Upper lobe of right lung (tissue), 1 donor: ENCODE measurements at regions of chr2 and their contacts with region 1.

Region 1: DNA sequence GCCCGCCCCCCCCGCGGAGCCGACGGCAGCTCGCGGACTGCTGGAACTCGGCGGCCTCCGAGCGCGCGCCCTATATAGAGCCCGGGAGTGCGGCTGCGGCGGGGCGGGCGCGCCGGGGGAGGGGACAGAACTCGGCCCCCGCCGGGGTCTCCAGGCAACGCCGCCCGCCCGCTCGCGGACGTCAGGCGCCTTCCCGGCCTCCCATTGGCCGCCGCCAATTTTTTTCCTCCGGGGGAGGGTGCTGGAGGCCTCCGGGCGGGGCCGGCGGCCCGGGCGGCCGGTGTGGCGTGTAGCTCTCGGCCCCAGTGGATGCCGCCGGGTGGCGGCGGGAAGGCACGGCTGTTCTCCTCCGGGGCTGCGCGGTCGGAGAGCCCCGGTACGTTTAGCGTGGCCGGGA is at the start of gene ZFP36L2:
- DNase-seq: peak; percentile 99
- ATAC-seq: peak; percentile 83
- H3K4me3 ChIP-seq: peak within 1 kb of the TSS; percentile 82
- H3K27ac ChIP-seq: peak within 1 kb of the TSS; percentile 98
- H3K4me1 ChIP-seq: peaks cover 35% of the 10 kb centered on the region
- H3K27me3 ChIP-seq: no peaks in the 10 kb centered on the region
- CTCF ChIP-seq: no peak
- total RNA-seq, gene ZFP36L2: 139 TPM

Region 2: GRCh38 chr2:42944779-42945415 is 281.7 kb before region 1 on chr2:
- intact Hi-C with region 1: loop called (anchors 5 kb)
- DNase-seq: no peak
- ATAC-seq: no peak
- H3K4me3 ChIP-seq: no peak overlapping the region
- H3K27ac ChIP-seq: no peak overlapping the region
- H3K4me1 ChIP-seq: peaks cover 25% of the 10 kb centered on the region
- H3K27me3 ChIP-seq: no peaks in the 10 kb centered on the region
- CTCF ChIP-seq: no peak

Region 3: GRCh38 chr2:42974721-42975717 is 251.5 kb before region 1 on chr2:
- intact Hi-C with region 1: loop called (anchors 10 kb)
- DNase-seq: peak; percentile 85
- ATAC-seq: peak; percentile 88
- H3K4me3 ChIP-seq: peak overlapping the region; percentile 32
- H3K27ac ChIP-seq: peak overlapping the region; percentile 65
- H3K4me1 ChIP-seq: peaks cover 15% of the 10 kb centered on the region
- H3K27me3 ChIP-seq: no peaks in the 10 kb centered on the region
- CTCF ChIP-seq: peak; percentile 83

Region 4: GRCh38 chr2:43131024-43131889 is 95.3 kb before region 1 on chr2:
- intact Hi-C with region 1: loop called (anchors 10 kb)
- DNase-seq: peak; percentile 88
- ATAC-seq: peak; percentile 64
- H3K4me3 ChIP-seq: no peak overlapping the region
- H3K27ac ChIP-seq: peak overlapping the region; percentile 86
- H3K4me1 ChIP-seq: peaks cover 72% of the 10 kb centered on the region
- H3K27me3 ChIP-seq: no peaks in the 10 kb centered on the region
- CTCF ChIP-seq: peak; percentile 62

Region 5: DNA sequence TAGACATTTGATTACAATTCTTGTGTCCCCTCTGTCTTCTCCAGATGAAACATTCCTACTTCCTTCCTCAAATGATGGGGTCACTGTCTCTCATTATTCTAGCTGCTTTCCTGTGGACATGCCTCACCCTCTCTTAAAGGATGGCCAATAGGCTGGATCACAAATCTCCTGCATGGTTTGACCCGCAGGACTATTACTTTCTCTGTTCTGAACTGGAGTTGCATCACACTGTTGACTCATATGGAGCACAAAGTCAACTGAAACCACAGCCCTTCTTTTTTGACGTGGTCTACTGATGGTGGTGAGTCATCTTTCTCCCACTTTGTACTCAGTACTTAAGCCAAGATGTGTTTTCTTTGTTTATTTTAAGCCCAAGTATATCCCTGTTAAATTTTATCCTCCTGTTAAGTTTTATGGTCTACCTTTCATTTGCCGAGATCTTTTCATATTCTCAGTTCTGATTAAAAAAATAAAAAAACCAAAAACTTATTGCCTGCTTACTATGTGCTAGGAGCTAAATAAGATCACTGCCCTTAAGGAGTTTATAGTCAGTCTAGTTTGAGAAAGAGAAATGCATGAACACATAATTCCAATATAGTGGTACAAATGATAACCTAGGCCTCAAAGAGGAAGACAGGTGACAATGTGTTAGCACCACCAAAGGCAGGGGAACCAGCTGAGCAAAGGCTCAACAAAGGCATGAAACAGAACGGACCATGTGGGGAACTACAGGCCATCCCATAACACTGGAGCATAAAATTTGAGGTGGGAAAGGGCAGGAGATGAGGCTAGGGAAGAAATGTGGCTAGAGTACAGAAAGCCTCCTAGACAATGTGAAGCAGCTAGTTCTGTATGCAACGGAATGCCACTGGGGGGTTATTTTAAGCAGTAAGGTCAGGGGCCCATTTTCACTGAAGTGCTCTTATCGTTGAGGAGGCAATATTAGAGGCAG is 67.5 kb after region 1 on chr2:
- intact Hi-C with region 1: no loop called
- DNase-seq: no peak
- ATAC-seq: peak; percentile 93
- H3K4me3 ChIP-seq: no peak overlapping the region
- H3K27ac ChIP-seq: peak overlapping the region; percentile 26
- H3K4me1 ChIP-seq: peaks cover 17% of the 10 kb centered on the region
- H3K27me3 ChIP-seq: no peaks in the 10 kb centered on the region
- CTCF ChIP-seq: no peak

Region 6: GRCh38 chr2:43387092-43388062 is 160.8 kb after region 1 on chr2:
- intact Hi-C with region 1: no loop called
- DNase-seq: no peak
- ATAC-seq: peak; percentile 67
- H3K4me3 ChIP-seq: no peak overlapping the region
- H3K27ac ChIP-seq: peak overlapping the region; percentile 7
- H3K4me1 ChIP-seq: peaks cover 20% of the 10 kb centered on the region
- H3K27me3 ChIP-seq: no peaks in the 10 kb centered on the region
- CTCF ChIP-seq: no peak

Region 7: DNA sequence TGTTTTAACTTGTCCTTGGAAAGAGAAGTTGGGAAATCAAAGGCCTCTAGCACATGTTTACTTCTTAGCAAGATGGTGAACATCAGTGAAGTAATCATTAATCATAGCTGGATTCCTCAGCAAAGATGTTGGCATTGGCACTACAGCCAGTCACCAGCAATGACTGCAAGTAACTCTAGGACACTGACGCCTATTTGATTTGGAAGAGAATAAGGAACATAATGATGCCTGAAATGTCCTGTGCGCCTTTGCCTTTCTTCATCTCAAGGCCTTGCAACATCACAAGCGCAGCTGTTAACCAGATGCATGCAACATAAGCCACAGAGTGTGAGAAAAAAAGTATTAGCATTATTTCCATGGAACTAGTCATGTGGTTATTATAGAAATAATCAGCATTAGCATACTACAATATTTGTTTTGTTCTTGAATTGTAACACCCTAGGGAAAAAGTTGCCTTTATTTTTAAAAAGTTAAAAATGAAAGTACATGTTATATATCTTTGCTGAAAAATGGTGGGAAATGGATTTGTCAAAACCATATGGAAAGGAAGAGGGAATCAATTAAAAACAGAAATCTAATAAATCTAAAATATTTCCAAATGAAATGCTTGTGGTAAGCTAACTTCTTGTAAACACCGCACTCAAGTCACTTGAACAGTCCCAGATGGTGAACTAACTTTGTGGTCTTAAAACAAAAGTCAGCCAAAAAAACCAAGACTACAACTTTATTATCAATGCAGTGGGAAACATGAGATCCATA is 313.6 kb after region 1 on chr2:
- intact Hi-C with region 1: no loop called
- DNase-seq: no peak
- ATAC-seq: peak; percentile 96
- H3K4me3 ChIP-seq: no peak overlapping the region
- H3K27ac ChIP-seq: peak overlapping the region; percentile 65
- H3K4me1 ChIP-seq: peaks cover 11% of the 10 kb centered on the region
- H3K27me3 ChIP-seq: no peaks in the 10 kb centered on the region
- CTCF ChIP-seq: no peak